ENCODE measurements at regions of chr19 and their contacts with region 1.

Region 1: GRCh38 chr19:15623711-15624318 is 8.8 kb downstream of the CYP4F8 start:
- DNase-seq: no peak
- H3K4me3 ChIP-seq: no peak overlapping the region
- H3K27ac ChIP-seq: no peak overlapping the region
- H3K4me1 ChIP-seq: no peaks in the 10 kb centered on the region
- H3K27me3 ChIP-seq: peaks cover 6% of the 10 kb centered on the region
- CTCF ChIP-seq: no peak
- EP300 ChIP-seq: no peak
- POLR2A ChIP-seq: no peak

Region 2: DNA sequence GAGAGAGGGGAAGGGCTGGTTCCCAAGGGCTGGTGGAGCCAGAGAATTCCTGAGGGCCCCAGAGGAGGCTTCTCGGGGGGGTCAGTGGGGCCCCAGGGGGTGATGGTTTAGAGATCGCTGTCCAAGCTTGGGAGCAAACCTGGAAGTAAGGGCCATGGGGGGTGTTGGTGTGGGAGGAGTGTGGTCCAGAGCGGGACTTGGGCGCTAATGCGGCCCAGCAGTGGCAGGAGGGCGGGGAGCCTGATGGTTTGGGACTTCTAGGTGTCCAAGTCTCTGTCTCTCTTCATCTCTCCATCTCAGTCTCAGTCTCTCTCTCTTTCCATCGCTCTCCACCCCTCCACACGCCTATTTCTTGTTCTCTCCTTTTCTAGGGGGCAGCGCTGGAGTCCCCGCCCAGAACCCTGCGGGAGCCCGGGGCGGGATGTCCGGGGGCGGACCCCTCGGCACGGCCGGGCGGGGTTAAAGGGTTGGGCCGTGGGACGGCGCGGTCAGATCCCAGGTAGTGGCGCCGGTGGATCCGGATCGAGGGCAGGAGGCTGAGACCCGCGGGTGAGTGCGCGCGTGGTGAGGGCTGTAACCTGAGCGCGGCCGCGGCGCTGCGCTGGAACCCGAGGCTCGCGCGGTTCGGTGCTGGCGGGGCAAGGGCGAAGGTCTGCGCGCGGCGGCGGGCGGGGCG is 115.6 kb before region 1 on chr19 and contains the start of gene CYP4F22:
- in situ Hi-C with region 1: no loop called
- intact Hi-C with region 1: no loop called
- DNase-seq: no peak
- H3K4me3 ChIP-seq: peak within 1 kb of the TSS in 1 of 4 donors; percentile 29
- H3K27ac ChIP-seq: no peak within 1 kb of the TSS
- H3K4me1 ChIP-seq: peaks cover 0 to 7% (median 3%) of the 10 kb centered on the region in 4 donors
- H3K27me3 ChIP-seq: peaks cover 45% of the 10 kb centered on the region
- CTCF ChIP-seq: no peak
- EP300 ChIP-seq: no peak
- POLR2A ChIP-seq: no peak
- total RNA-seq, gene CYP4F22: not detected

Region 3: GRCh38 chr19:16001481-16002312 is 377.9 kb after region 1 on chr19:
- in situ Hi-C with region 1: loop called in 2 of 4 experiments (anchors 25 kb)
- intact Hi-C with region 1: no loop called
- DNase-seq: peak; percentile 21
- H3K4me3 ChIP-seq: peak overlapping the region; percentile 1 to 38 (median 20)
- H3K27ac ChIP-seq: peak overlapping the region in 2 of 4 donors; percentile 7 to 20
- H3K4me1 ChIP-seq: peaks cover 6 to 14% (median 6%) of the 10 kb centered on the region in 4 donors
- H3K27me3 ChIP-seq: no peaks in the 10 kb centered on the region
- CTCF ChIP-seq: no peak
- EP300 ChIP-seq: no peak
- POLR2A ChIP-seq: no peak

Measured in transverse colon (tissue), 4 donors.